ENCODE measurements at regions of chr13 and their contacts with region 1.

Region 1: DNA sequence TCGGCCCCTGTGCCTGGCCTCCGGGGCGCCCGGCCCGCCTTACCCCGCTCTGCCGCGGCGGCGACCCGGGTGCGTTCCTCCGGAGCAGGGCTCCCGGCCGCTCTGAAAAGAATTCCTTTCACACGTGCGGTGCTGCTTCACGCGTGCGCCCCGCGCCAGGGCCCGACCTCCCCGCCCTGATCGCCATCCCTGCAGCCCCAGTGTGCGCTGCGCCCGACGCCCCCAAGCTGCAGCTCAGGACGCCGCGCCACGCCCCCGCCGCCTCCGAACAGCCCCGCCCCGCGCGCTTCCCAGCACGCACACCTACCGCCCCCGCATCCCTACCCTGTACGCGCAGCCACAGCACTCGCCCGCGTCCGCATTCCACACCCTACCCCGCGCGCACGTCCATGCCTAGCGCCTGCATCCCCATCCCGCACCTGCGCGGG is at the start of gene GJA3:
- DNase-seq: no peak
- H3K4me3 ChIP-seq: peak within 1 kb of the TSS in 3 of 4 donors; percentile 26 to 41 (median 38)
- H3K27ac ChIP-seq: no peak within 1 kb of the TSS
- H3K4me1 ChIP-seq: peaks cover 0 to 25% (median 17%) of the 10 kb centered on the region in 4 donors
- H3K27me3 ChIP-seq: peaks cover 36 to 85% (median 64%) of the 10 kb centered on the region in 3 donors
- CTCF ChIP-seq: no peak
- EP300 ChIP-seq: no peak
- POLR2A ChIP-seq: no peak
- total RNA-seq, gene GJA3: not detected

Region 2: GRCh38 chr13:19927117-19927748 is 233.6 kb before region 1 on chr13:
- intact Hi-C with region 1: loop called (anchors 5 kb)
- DNase-seq: no peak
- H3K4me3 ChIP-seq: no peak overlapping the region
- H3K27ac ChIP-seq: no peak overlapping the region
- H3K4me1 ChIP-seq: no peaks in the 10 kb centered on the region
- H3K27me3 ChIP-seq: no peaks in the 10 kb centered on the region
- CTCF ChIP-seq: peak; percentile 31 to 57 (median 46)
- EP300 ChIP-seq: no peak
- POLR2A ChIP-seq: no peak

Region 3: DNA sequence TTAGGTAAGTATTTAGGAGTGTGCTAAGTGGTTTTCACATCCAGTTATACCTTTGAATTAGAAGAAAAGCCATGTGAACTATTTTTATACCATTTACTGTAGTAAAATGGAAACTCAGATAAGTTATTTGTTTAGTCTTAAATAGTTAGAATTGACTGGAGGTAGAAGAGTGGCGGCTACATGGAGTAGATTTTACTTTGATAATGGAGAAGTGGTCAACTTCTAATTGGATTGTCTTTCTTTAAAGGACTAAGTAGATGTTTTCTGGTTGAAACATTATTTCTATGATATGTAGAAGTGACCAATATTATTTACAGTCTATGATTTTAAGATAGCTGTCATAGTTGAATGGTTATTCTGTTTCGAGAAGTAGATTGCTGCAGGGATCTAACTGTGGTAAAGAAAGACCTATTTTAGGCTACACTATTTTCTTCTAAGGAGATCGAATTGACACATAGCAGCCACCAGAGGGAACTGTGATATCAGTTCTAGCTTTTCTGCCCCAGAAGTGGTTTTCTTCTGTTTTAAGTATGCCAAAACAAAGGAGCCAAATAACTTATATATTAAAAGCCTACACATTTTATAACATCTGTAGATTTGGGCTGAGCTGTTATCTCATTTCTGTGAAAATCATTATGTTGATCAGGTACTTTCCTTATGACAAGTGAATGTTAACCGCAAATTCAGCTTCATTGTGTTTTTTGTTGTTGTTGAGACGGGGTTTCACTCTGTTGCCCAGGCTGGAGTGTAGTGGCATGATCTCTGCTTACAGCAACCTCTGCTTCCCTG is 176.2 kb before region 1 on chr13:
- intact Hi-C with region 1: loop called (anchors 5 kb)
- DNase-seq: no peak
- H3K4me3 ChIP-seq: no peak overlapping the region
- H3K27ac ChIP-seq: no peak overlapping the region
- H3K4me1 ChIP-seq: peaks cover 0 to 18% (median 9%) of the 10 kb centered on the region in 4 donors
- H3K27me3 ChIP-seq: no peaks in the 10 kb centered on the region
- CTCF ChIP-seq: peak in 2 of 4 experiments; percentile 21 to 57
- EP300 ChIP-seq: no peak
- POLR2A ChIP-seq: no peak

Region 4: GRCh38 chr13:20090349-20090748 is 70.5 kb before region 1 on chr13:
- intact Hi-C with region 1: loop called (anchors 5 kb)
- DNase-seq: no peak
- H3K4me3 ChIP-seq: no peak overlapping the region
- H3K27ac ChIP-seq: no peak overlapping the region
- H3K4me1 ChIP-seq: no peaks in the 10 kb centered on the region
- H3K27me3 ChIP-seq: no peaks in the 10 kb centered on the region
- CTCF ChIP-seq: no peak
- EP300 ChIP-seq: no peak
- POLR2A ChIP-seq: no peak

Region 5: GRCh38 chr13:20127577-20128466 is 33.0 kb before region 1 on chr13:
- intact Hi-C with region 1: loop called (anchors 2 kb)
- DNase-seq: peak; percentile 82
- H3K4me3 ChIP-seq: peak overlapping the region; percentile 56 to 68 (median 62)
- H3K27ac ChIP-seq: peak overlapping the region; percentile 85 to 92 (median 89)
- H3K4me1 ChIP-seq: peaks cover 0 to 33% (median 26%) of the 10 kb centered on the region in 4 donors
- H3K27me3 ChIP-seq: peaks cover 0 to 10% (median 0%) of the 10 kb centered on the region in 3 donors
- CTCF ChIP-seq: peak in 3 of 4 experiments; percentile 15 to 47 (median 40)
- EP300 ChIP-seq: no peak
- POLR2A ChIP-seq: no peak

Region 6: GRCh38 chr13:20378721-20379120 is 217.9 kb after region 1 on chr13:
- intact Hi-C with region 1: no loop called
- DNase-seq: no peak
- H3K4me3 ChIP-seq: no peak overlapping the region
- H3K27ac ChIP-seq: no peak overlapping the region
- H3K4me1 ChIP-seq: no peaks in the 10 kb centered on the region
- H3K27me3 ChIP-seq: no peaks in the 10 kb centered on the region
- CTCF ChIP-seq: no peak
- EP300 ChIP-seq: no peak
- POLR2A ChIP-seq: no peak

Measured in sigmoid colon (tissue), 7 donors.